ENCODE measurements at regions of chr3 and their contacts with region 1.

Region 1: GRCh38 chr3:94062431-94063404 is at the starts of genes DHFR2 and NSUN3:
- DNase-seq: peak; percentile 93
- H3K4me3 ChIP-seq: peak within 1 kb of the TSS; percentile 65
- CTCF ChIP-seq: no peak

Region 2: GRCh38 chr3:94036909-94037507 is 25.7 kb before region 1 on chr3:
- CTCF ChIA-PET with region 1: interaction called, 10 read pairs
- POLR2A ChIA-PET with region 1: no interaction called
- DNase-seq: no peak
- H3K4me3 ChIP-seq: no peak overlapping the region
- CTCF ChIP-seq: peak; percentile 43